Activated CD4-positive, alpha-beta T cell treated with anti-CD3 and anti-CD28 coated beads for 36 hours (primary cell): ENCODE measurements at regions of chr5 and their contacts with region 1.

Region 1: GRCh38 chr5:80864706-80865435 is 95.3 kb upstream of the RASGRF2 start:
- DNase-seq: peak; percentile 39
- ATAC-seq: peak; percentile 78
- H3K4me3 Mint-ChIP-seq: no peak overlapping the region
- H3K27ac Mint-ChIP-seq: peak overlapping the region; percentile 21
- H3K4me1 Mint-ChIP-seq: peaks cover 53% of the 10 kb centered on the region
- H3K27me3 Mint-ChIP-seq: no peaks in the 10 kb centered on the region

Region 2: GRCh38 chr5:80793354-80793753 is 71.5 kb before region 1 on chr5:
- CTCF ChIA-PET with region 1: no interaction called
- POLR2A ChIA-PET with region 1: no interaction called
- intact Hi-C with region 1: loop called in 1 of 2 experiments (anchors 2 kb)
- DNase-seq: no peak
- ATAC-seq: no peak
- H3K4me3 Mint-ChIP-seq: no peak overlapping the region
- H3K27ac Mint-ChIP-seq: no peak overlapping the region
- H3K4me1 Mint-ChIP-seq: peaks cover 9% of the 10 kb centered on the region
- H3K27me3 Mint-ChIP-seq: no peaks in the 10 kb centered on the region

Region 3: GRCh38 chr5:81288021-81288433 is 423.2 kb after region 1 on chr5:
- CTCF ChIA-PET with region 1: no interaction called
- POLR2A ChIA-PET with region 1: no interaction called
- intact Hi-C with region 1: loop called in 1 of 2 experiments (anchors 10 kb)
- DNase-seq: no peak
- ATAC-seq: peak; percentile 14
- H3K4me3 Mint-ChIP-seq: no peak overlapping the region
- H3K27ac Mint-ChIP-seq: no peak overlapping the region
- H3K4me1 Mint-ChIP-seq: peaks cover 57% of the 10 kb centered on the region
- H3K27me3 Mint-ChIP-seq: no peaks in the 10 kb centered on the region

Region 4: DNA sequence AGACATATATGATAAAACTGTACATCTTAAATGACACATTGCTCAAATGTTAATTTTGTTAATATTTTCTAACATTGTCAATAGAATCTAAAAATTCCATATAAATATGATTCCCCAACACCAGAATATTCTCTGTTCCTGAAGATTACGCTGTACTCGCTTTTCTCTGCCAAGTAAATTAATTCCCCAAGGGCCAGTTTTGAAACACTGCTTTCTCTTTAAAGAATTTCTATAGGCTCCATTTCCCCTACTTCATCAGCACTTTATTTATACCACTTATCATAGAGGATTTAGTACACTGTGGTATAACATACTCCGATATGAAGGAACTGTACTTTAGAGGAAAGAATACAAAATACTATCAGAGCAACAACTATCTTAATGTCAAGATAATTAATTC is 630.4 kb after region 1 on chr5:
- CTCF ChIA-PET with region 1: no interaction called
- POLR2A ChIA-PET with region 1: no interaction called
- intact Hi-C with region 1: no loop called
- DNase-seq: no peak
- ATAC-seq: no peak
- H3K4me3 Mint-ChIP-seq: no peak overlapping the region
- H3K27ac Mint-ChIP-seq: no peak overlapping the region
- H3K4me1 Mint-ChIP-seq: no peaks in the 10 kb centered on the region
- H3K27me3 Mint-ChIP-seq: no peaks in the 10 kb centered on the region